ENCODE measurements at regions of chr6 and their contacts with region 1.

Region 1: GRCh38 chr6:79949233-79949632 is 1.9 kb upstream of the ELOVL4 start:
- DNase-seq: no peak
- ATAC-seq: no peak
- H3K4me3 ChIP-seq: no peak overlapping the region
- H3K27ac ChIP-seq: no peak overlapping the region
- H3K4me1 ChIP-seq: no peaks in the 10 kb centered on the region
- H3K27me3 ChIP-seq: no peaks in the 10 kb centered on the region

Region 2: DNA sequence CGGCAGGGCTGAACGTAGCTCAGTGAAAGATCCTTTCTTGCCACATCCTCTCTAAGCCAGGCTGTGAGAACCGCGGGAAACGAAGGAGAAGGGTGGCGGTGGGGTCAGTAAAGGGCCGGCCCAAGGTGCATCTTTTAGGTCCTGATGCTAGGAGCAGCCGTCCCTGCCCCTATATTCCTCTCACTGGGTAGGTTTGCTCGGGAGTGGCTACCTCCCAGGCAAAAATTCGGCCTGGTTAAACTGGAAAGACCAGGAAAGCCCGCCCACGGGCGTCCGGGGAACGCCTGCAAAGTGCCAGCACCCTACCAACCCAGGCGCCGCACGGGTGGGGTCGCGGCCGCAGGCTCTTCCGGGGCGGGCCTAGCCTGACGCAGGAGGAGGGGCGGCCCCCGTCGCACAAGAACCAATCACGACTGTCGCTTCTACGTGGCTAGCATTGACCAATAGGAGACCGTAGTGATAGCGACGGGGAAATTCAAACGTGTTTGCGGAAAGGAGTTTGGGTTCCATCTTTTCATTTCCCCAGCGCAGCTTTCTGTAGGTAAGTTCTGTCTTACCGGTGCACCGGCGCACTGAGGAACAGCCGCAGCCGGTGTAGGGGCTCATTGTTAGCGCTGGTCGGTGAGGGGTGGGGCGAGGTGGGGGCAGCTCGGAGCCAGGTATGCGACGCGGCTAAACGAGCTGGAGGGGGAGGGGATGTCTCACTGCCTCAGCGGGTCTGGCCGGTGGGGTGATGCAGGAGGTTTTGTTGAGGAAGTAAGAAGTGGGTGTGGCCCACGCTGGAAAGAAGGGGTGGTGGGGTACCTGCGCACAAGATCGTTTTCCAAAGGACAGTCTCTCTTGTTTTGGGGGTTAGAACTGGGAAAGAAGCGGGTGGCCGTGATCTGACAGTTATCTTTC is 55.2 kb after region 1 on chr6 and contains the start of gene TTK:
- intact Hi-C with region 1: loop called (anchors 5 kb)
- DNase-seq: peak; percentile 94 to 96
- ATAC-seq: peak; percentile 100
- H3K4me3 ChIP-seq: peak within 1 kb of the TSS; percentile 39 to 51
- H3K27ac ChIP-seq: peak within 1 kb of the TSS in 1 of 2 donors; percentile 65
- H3K4me1 ChIP-seq: no peaks in the 10 kb centered on the region
- H3K27me3 ChIP-seq: no peaks in the 10 kb centered on the region
- total RNA-seq, gene TTK: 0.45 to 0.84 TPM

Region 3: DNA sequence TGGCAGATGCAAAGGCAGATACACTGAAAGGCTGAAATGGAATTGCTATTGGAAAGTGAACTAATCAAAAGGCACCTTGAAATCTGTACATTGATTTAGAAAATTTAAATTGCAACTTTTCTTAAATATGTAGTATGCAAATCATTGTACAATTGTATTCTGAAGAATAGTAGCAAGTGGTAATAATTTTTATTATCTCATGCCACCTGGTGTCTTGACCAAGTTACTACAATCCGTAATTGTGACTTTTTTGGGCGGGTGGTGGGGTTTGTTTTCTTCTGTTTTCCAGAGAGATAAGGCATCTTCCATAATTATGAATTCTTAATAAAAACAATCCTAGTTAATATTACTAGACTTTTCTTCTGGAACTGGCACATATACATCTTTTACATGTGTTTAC is 144.8 kb after region 1 on chr6:
- intact Hi-C with region 1: loop called in 1 of 2 experiments (anchors 5 kb)
- DNase-seq: no peak
- ATAC-seq: no peak
- H3K4me3 ChIP-seq: no peak overlapping the region
- H3K27ac ChIP-seq: no peak overlapping the region
- H3K4me1 ChIP-seq: no peaks in the 10 kb centered on the region
- H3K27me3 ChIP-seq: no peaks in the 10 kb centered on the region

Region 4: DNA sequence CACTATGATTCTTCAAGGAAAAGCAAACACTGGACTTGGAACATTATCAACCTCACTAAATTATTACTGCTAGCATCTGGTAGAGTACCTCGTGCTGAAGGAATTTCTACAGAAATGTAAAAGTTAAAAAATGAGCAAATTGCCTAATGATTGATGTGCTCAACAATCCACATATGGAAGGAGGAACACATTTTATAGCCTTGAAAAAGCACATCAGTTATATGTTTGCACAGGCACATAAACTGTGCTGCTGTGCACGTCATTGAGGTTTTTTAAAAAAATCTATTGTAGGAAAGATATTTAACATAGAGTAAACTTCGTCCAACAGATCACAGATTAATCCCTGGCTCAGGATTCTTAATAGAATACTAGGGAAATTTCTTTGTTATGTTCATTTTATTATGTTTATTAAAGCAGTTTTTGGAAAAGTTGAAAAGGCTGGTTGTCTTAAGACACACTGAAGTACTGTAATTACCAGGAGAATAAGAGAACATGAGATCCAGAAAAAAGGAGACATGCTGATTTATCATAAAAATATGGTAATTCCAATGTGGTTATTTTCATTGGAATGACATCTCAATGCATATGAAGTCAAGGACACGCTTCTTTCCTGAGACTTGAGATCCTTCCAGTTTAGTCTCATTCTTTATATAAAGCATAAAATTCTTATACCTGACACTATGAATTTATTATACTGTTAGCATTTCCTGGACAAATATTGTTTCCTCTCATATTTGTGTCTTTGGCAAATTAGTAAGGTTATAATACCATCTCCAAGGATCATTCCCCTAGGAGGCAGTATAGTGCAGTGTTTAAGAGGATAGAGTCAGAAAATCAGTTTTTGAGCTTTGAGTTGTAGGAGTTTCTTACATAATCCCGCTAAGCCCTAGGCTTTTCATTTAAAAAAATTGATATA is 1292.2 kb after region 1 on chr6:
- intact Hi-C with region 1: no loop called
- DNase-seq: no peak
- ATAC-seq: no peak
- H3K4me3 ChIP-seq: no peak overlapping the region
- H3K27ac ChIP-seq: no peak overlapping the region
- H3K4me1 ChIP-seq: no peaks in the 10 kb centered on the region
- H3K27me3 ChIP-seq: no peaks in the 10 kb centered on the region